Lower leg skin (tissue), 4 donors: ENCODE measurements at regions of chr1 and their contacts with region 1.

Region 1: DNA sequence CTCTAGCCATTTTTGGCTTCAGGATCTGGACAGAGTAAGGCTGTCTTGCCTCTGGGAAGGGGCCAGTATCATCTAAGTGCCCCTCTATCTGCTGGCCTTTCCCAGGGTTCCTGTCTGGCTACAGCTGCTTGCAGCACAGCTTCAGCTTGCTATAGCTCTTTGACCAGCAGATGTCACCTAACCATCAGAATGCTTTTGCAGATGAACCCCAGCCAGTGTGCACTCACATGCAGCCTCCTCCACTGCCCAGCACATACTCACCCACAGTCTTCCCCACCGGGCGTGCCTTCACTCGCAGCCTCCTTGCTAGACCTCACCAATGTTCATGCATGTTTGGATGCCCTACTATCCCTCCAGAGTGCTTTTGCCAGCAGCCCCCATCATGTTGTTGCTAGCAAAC is 769.0 kb downstream of the BRINP3 start:
- DNase-seq: no peak
- H3K4me3 ChIP-seq: no peak overlapping the region
- CTCF ChIP-seq: no peak
- POLR2A ChIP-seq: no peak

Region 2: DNA sequence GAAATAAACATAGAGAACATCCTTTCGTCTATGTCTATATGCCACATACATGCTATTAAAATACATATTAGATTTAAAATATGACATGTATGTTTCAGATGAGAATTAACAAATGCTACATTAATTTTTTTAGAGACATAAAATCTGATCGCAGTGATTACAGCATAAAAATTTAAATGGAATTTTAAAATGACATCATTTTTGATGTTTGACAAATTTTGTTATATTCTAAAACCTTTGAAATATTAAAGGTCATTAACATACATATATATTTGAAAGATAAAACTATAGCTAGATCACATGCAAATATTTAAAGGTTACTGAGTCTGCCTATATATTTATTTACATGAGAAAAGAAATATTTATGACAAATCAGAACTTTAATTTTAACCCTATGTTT is 216.0 kb before region 1 on chr1:
- intact Hi-C with region 1: loop called (anchors 5 kb)
- DNase-seq: no peak
- H3K4me3 ChIP-seq: no peak overlapping the region
- CTCF ChIP-seq: no peak
- POLR2A ChIP-seq: no peak

Region 3: DNA sequence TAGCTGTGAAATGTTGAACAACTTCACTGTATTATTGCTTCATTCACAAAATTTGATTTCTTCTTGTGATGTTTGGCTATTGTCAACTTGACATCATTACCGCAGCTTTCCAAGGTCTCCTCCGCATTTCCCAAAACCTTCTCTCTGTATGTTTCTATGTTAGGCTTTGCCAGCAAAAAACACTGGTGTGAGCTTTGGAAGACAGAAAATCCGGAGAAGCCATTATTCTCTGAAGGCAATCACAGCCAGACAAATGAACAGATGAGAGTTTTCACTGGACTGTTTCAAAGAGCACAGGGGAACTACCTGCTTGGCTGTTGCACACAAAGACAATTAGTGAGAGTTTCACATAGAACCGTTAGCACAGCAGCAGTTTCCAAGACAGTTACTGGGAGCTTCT is 159.3 kb after region 1 on chr1:
- intact Hi-C with region 1: no loop called
- DNase-seq: no peak
- H3K4me3 ChIP-seq: no peak overlapping the region
- CTCF ChIP-seq: no peak
- POLR2A ChIP-seq: no peak